AG04449 (cell line): ENCODE measurements at regions of chr12 and their contacts with region 1.

Region 1: GRCh38 chr12:118372541-118373495 is at the start of gene TAOK3:
- DNase-seq: peak; percentile 95
- H3K4me3 ChIP-seq: peak within 1 kb of the TSS; percentile 89
- CTCF ChIP-seq: no peak

Region 2: GRCh38 chr12:118164798-118165486 is 207.9 kb before region 1 on chr12:
- CTCF ChIA-PET with region 1: interaction called, 112 read pairs
- POLR2A ChIA-PET with region 1: no interaction called
- DNase-seq: no peak
- H3K4me3 ChIP-seq: no peak overlapping the region
- CTCF ChIP-seq: peak; percentile 45

Region 3: GRCh38 chr12:118189741-118190191 is 183.1 kb before region 1 on chr12:
- CTCF ChIA-PET with region 1: interaction called, 589 read pairs
- POLR2A ChIA-PET with region 1: interaction called, 4 read pairs
- DNase-seq: peak; percentile 19
- H3K4me3 ChIP-seq: peak overlapping the region; percentile 64
- CTCF ChIP-seq: no peak

Region 4: GRCh38 chr12:118237052-118237665 is 135.7 kb before region 1 on chr12:
- CTCF ChIA-PET with region 1: interaction called, 12 read pairs
- POLR2A ChIA-PET with region 1: no interaction called
- DNase-seq: no peak
- H3K4me3 ChIP-seq: no peak overlapping the region
- CTCF ChIP-seq: no peak

Region 5: GRCh38 chr12:118307069-118307954 is 65.5 kb before region 1 on chr12:
- CTCF ChIA-PET with region 1: interaction called, 40 read pairs
- POLR2A ChIA-PET with region 1: interaction called, 7 read pairs
- DNase-seq: peak; percentile 91
- H3K4me3 ChIP-seq: peak overlapping the region; percentile 50
- CTCF ChIP-seq: no peak

Region 6: GRCh38 chr12:118391424-118391823 is 18.6 kb after region 1 on chr12:
- CTCF ChIA-PET with region 1: interaction called, 97 read pairs
- POLR2A ChIA-PET with region 1: no interaction called
- DNase-seq: no peak
- H3K4me3 ChIP-seq: no peak overlapping the region
- CTCF ChIP-seq: no peak

Region 7: GRCh38 chr12:119544765-119545625 is 1172.2 kb after region 1 on chr12:
- CTCF ChIA-PET with region 1: interaction called, 68 read pairs
- POLR2A ChIA-PET with region 1: no interaction called
- DNase-seq: peak; percentile 28
- H3K4me3 ChIP-seq: no peak overlapping the region
- CTCF ChIP-seq: peak; percentile 71